ENCODE measurements at regions of chr19 and their contacts with region 1.

Region 1: DNA sequence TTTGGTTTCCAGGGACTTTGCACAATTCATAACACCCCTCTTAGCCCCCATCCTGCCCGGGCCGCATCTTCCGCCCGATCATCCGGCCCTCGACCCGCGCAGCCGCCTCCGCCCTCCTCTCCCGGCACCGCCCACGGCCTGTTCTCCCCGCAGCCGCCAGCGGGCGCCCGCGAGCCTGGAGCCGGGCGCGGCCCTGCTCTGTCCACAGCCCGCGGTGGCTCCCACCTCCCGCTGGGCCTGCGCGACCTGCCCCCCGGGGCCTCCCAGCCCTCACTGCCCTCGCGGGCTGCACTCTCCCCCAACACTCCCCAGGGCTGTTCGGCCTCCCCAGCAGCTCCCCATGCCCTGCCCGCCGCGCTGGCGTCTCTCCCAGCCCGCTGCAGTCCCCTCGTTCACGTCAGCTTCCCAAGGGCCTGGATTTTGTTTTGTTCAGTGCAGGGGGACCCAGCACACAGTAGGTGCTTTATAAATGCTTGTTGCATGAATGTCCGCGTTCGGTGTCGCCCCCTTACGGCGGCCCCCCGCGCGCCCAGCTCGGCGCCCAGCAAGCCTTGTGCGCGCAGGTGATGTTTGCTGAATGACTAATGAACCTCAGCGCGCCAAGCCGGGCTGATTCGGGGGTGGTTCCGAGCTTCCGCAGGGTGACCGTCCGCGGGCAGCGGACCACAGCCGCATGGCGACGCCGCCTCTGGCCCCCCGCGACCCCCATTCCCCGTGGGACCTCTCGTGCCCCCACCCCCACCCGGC is 4.6 kb upstream of the APC2 start:
- DNase-seq: peak; percentile 86
- ATAC-seq: peak; percentile 90

Region 2: GRCh38 chr19:1406774-1407499 is 38.4 kb before region 1 on chr19:
- intact Hi-C with region 1: loop called (anchors 5 kb)
- DNase-seq: peak; percentile 100
- ATAC-seq: peak; percentile 93

Region 3: DNA sequence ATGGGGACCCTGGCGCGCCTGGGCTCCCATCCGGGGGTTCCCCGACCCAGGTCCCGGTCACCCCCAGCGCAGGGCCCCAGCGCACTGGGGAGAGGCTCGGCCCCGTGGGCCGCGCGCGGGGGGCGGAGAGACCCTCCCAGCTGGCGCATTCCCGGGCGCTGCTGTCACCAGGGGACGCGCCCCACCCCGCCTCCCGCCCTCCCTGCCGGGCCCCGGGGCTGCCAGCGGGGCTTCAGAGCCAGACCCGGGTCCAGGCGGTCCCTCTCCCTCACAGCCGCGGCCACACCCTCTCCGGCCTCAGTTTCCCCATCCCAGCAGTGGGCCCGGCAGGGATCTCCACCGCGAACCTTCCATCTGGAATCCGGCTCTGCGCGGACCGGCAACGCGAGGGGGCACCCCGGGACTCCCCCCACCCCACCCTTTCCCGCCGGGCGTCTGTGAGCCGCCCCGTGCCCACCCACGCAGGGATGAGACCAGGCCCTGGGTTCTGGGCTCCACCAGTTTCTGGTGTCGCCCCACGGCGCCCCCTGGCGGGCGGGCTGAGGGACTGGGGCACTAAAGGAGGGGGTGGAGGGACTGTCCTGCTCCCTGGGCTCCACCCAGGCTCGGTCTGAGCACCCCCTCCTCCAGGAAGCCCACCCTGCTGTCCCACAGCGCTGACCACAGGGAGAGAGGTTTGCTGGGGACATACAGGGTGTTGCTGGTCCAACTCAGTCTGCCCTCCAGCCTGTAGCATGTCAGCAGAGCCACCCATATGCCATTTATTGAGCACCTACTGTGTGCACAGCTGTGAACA is 68.3 kb after region 1 on chr19:
- intact Hi-C with region 1: loop called (anchors 5 kb)
- DNase-seq: no peak
- ATAC-seq: peak; percentile 49

Region 4: DNA sequence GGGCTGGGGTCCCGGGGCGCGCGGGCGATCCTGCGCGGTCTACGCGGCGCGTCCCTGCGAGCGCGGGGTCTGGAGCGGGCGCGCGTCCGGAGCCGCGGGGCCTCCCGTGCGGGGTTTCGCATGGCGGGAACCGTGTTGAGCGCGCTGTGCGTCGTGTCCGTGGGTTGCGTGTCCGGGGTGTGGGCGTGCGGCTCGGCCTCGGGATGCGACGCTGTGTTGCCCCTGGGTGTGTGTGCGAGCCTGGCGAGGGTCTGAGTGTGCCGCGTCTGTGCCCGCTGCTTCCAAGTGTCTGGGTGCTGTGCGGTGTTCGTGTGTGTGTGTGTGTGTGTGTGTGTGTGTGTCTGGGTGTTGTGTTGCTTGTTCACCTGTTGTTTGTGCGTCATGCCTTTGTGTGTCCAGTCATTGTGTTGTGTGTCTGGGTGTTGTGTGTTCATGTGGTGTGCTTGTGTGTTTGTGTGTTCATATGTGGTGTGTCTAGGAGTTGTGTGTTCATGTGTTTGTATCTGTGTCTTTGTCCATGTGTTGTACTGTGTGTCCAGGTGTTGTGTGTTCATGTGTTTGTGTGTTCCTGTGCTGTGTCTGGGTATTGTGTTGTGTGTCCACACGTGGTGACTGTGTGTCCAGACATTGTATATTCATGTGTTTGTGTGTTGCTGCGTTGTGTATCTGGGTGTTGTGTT is 79.1 kb after region 1 on chr19:
- intact Hi-C with region 1: no loop called
- DNase-seq: no peak
- ATAC-seq: no peak